Posterior cingulate gyrus (tissue), 11 donors: ENCODE measurements at regions of chr3 and their contacts with region 1.

Region 1: DNA sequence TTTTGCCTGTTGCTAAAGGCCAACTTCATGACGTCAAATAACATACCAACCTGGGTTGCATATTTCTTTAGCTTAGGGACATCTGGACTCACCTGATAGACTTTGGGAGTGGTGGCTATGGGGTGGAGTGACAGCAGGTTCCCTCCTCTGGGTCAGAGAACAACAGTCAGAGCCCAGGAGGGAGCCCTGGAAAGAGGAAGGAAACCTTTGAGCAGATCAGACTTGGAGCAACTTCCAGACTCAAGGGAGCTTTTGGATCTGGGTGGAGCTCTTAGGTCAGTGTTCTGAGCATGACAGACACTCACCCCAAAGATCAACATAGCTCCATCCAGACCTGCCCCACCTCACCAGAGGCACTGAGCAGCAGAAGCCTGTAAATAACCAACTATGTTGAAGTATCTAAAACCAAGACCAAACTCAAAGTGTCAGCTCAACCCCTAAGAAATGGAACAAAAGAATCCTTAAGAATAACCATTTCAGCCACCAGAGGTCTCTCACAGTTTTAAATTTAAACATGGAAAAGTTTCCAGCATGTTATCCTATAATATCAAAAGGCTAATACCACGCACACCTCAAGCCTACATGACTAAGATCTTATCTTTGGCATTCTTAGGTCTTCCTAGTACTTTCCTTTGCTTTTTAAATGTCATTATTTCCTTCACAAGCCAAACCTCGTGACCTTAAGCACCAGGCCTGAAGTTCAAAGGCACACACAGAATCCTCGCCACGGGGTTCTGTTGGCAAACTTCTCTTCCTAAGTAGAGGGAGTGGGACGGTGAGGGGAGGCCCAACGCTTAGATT is 56.4 kb downstream of the UMPS start:
- DNase-seq: peak in 1 of 10 donors; percentile 35

Region 2: DNA sequence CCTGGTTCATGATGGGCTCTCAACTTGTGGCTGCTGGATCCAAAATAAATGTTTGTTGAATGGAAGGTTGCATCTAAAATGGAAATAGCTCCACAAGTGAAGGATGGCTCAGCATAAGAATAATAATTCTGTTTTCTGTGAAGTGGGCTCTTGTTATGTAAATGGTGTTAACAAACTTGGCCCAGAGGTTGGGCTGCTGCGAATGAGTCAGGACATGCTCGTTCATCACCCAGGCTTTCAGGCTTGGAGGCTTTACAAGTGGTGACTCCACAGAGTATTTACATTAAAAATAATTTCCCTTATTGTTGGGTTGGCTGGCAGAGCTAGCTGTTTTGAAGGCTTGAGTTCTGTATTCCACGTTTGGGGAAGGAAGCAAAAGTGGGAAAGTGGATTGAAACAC is 40.1 kb after region 1 on chr3:
- intact Hi-C with region 1: no loop called
- DNase-seq: peak in 1 of 10 donors; percentile 86

Region 3: DNA sequence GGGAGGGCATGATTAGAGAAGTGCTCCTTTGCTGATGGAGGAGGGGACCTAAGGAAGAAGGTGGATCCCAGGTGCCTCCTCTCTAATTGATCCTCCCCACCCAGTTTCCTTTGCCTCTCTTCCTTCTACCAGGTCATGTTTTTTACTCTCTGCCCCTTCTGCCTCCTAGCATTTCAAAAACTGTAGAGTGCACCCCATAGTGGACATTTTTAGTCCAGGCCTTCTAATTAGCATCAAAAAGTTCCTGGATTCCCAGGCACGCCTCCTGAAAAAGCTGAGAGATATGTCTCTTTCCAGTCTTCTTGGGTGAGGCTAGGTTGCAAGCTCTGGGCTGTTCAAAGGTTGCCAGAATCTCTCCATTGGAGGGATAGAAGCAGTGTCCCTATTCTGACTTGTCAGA is 119.2 kb after region 1 on chr3:
- intact Hi-C with region 1: loop called (anchors 1 kb)
- DNase-seq: no peak

Region 4: DNA sequence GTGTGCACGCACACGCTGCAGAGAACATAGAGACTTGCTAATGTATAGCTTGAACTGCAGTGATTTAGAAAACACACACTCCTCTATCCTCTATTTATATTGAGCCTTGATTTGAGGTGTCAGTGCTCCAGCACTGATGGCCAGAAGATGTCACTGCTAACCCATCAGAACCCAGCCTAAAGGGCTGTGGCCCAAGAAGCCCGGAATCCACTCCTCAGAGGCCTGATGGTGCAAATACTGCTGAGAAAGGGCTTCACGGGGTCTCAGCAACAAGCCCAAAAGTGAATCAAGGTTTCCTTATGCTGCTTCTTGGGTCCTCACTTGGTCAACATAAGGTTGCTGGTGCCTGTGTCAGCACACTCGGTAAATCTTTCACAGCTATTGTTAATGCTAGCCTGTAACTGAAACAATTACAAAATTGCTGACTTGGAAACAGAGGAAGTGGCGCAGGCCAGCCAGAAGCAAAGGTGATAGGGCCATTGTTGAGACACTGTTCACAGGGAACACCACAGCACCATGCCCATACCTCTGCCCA is 208.9 kb after region 1 on chr3:
- intact Hi-C with region 1: no loop called
- DNase-seq: peak in 9 of 10 donors; percentile 40 to 95 (median 71)